ENCODE measurements at regions of chr14 and their contacts with region 1.

Region 1: GRCh38 chr14:21014761-21015190 is 10.1 kb downstream of the NDRG2 start:
- ATAC-seq: peak; percentile 92 to 98 (median 96)
- H3K4me3 ChIP-seq: no peak overlapping the region
- H3K27ac ChIP-seq: no peak overlapping the region
- H3K4me1 ChIP-seq: peaks cover 3 to 4% of the 10 kb centered on the region in 2 donors

Region 2: GRCh38 chr14:21103710-21104447 is 89.1 kb after region 1 on chr14:
- in situ Hi-C with region 1: loop called in 1 of 9 experiments (anchors 25 kb)
- ATAC-seq: peak; percentile 80 to 93 (median 92)
- H3K4me3 ChIP-seq: peak overlapping the region; percentile 57 to 73 (median 61)
- H3K27ac ChIP-seq: peak overlapping the region; percentile 99 to 100
- H3K4me1 ChIP-seq: peaks cover 36 to 37% of the 10 kb centered on the region in 2 donors